GM13976 (cell line): ENCODE measurements at regions of chr22 and their contacts with region 1.

Region 1: GRCh38 chr22:39117585-39118191 is 20.6 kb downstream of the APOBEC3H start:
- DNase-seq: peak; percentile 73
- CTCF ChIP-seq: peak; percentile 42

Region 2: DNA sequence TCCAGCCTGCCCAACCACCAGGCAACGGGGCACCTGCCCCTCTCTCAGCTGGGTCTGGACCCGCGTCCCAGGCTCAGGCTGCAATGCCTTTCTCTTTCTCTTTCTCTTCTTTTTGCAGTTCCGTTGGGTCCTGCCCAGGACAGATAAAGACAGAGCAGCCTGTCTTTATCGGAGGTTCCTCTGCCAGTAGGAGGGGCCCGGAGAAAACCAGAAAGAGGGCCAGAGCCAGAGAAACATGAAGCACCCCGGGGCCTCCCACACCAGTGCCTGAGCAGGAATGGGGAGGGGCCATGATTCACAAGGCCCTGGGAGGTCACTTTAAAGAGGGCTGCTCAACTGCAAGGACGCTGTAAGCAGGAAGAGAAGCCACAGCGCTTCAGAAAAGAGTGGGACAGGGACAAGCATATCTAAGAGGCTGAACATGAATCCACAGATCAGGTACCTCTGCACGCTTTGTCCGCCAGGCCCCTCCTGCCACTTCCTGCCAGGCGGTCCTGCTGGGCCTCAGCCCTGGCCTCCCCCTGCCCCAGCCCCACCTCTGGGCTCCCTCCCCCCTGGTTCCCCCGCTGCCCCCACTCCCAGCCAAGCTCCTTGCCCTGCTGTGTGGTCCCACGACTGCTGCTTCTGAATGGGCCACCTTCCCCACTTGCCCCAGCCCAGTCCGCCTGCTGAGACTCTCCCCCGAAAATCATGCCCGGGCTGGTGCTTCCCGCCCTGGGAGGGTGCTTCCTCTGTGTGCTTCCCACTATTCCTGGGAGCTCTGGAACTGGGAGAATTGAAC is 103.6 kb before region 1 on chr22 and contains the start of gene APOBEC3C:
- in situ Hi-C with region 1: loop called (anchors 5 kb)
- DNase-seq: peak; percentile 89
- CTCF ChIP-seq: no peak